ENCODE measurements at regions of chr4 and their contacts with region 1.

Region 1: DNA sequence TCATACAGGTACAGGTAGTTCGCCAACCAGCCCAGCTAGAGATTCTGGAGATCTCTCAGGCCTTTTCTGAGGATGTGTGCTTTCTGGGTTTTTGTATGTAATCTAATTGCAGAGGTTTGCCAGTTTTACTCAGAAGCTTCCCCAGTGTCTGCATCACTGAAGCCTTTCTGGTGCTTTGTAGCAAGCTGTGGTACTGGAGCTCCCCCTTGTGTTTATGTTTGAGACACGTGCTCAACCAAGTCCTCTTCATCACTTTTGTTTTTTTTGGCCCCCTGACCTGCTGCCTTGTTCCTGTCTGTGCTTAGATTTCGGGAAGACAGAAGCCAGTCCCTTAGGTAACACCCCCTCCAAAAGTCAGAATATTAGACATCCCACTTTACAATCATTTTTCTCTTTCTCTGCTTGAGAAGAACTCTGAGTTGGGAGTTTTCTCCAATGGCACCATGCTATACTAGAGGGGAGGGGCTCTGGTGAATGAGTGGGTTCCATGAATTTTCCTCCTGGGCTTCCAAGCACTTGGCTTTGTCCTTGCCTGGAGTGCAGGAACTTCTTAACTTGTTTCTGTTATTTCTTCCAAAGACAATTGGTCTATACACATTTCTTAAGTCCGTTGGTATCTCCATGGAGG is 128.4 kb upstream of the TBC1D9 start:
- DNase-seq: peak; percentile 48 to 55
- H3K4me3 ChIP-seq: no peak overlapping the region
- H3K27ac ChIP-seq: no peak overlapping the region
- H3K4me1 ChIP-seq: no peaks in the 10 kb centered on the region
- H3K27me3 ChIP-seq: no peaks in the 10 kb centered on the region
- CTCF ChIP-seq: peak; percentile 75

Region 2: DNA sequence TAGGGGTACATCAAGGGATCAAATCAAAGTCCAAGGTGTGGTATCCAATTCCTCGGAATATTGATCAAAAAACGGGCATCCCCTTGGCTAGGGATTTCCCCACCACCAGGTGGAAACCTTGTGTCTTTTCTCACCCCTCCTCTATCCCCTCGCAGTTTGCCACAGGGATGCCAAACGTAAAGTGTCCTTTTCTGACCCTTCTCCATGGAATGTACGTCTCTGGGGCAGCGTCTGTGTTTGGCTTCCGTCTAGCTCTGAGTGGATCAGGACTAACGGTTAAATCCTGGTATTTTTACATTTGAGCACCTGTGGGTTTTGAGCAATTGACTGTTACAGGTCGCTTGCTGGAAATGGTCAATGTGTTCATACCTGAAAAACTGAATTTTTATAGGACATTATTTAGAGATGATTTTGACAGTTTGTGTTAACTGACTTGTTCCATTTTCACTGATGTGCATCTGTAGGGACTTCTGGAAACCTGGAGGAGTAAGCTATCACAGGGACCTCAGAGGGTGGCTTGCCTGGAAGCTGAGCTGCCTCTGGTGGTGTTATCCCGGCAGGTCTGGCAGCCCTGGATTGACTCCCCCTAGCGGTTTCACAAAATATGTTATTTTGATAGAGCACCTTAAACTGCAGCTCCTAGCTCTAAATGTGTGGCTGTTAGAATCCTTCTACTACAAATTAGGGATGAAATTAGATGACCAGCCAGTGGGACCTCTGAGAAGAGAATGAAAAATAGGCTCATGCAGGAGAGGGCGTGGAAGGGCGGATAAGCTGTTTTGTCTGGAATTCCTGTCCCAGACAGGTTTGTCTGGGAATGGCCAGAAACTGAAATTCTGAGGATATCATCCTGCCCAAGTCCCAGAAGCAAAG is 1227.7 kb before region 1 on chr4:
- CTCF ChIA-PET with region 1: no interaction called
- POLR2A ChIA-PET with region 1: no interaction called
- intact Hi-C with region 1: loop called (anchors 5 kb)
- DNase-seq: peak in 1 of 2 experiments; percentile 53
- H3K4me3 ChIP-seq: no peak overlapping the region
- H3K27ac ChIP-seq: no peak overlapping the region
- H3K4me1 ChIP-seq: peaks cover 19% of the 10 kb centered on the region
- H3K27me3 ChIP-seq: no peaks in the 10 kb centered on the region
- CTCF ChIP-seq: peak; percentile 85

Region 3: GRCh38 chr4:140595065-140595464 is 289.5 kb before region 1 on chr4:
- CTCF ChIA-PET with region 1: no interaction called
- POLR2A ChIA-PET with region 1: no interaction called
- intact Hi-C with region 1: loop called (anchors 1 kb)
- DNase-seq: peak; percentile 40 to 46
- H3K4me3 ChIP-seq: no peak overlapping the region
- H3K27ac ChIP-seq: no peak overlapping the region
- H3K4me1 ChIP-seq: no peaks in the 10 kb centered on the region
- H3K27me3 ChIP-seq: no peaks in the 10 kb centered on the region
- CTCF ChIP-seq: peak; percentile 67

Region 4: DNA sequence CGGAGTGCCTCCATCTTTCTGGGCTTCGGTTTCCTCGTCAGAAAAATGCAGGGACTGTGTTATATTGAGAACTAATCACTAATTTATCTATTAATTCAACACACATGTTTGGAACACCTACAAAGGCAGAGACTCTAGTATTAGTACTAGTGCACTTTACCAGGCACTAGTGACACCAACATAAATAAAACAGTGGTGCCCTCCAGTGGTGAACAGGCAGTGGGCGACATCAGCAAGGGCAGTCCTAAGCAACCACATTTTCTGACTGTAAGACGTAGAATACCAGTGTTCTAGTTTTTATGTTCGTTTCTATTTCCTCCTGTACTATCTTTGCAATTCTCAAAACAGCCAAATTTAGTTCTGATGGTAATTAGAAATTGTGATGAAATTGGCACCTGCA is 246.7 kb before region 1 on chr4:
- CTCF ChIA-PET with region 1: interaction called, 11 read pairs
- POLR2A ChIA-PET with region 1: no interaction called
- intact Hi-C with region 1: no loop called
- DNase-seq: no peak
- H3K4me3 ChIP-seq: no peak overlapping the region
- H3K27ac ChIP-seq: no peak overlapping the region
- H3K4me1 ChIP-seq: peaks cover 23% of the 10 kb centered on the region
- H3K27me3 ChIP-seq: no peaks in the 10 kb centered on the region
- CTCF ChIP-seq: peak; percentile 63

Region 5: GRCh38 chr4:140816806-140817510 is 67.6 kb before region 1 on chr4:
- CTCF ChIA-PET with region 1: no interaction called
- POLR2A ChIA-PET with region 1: no interaction called
- intact Hi-C with region 1: no loop called
- DNase-seq: no peak
- H3K4me3 ChIP-seq: no peak overlapping the region
- H3K27ac ChIP-seq: no peak overlapping the region
- H3K4me1 ChIP-seq: no peaks in the 10 kb centered on the region
- H3K27me3 ChIP-seq: no peaks in the 10 kb centered on the region
- CTCF ChIP-seq: no peak

Region 6: DNA sequence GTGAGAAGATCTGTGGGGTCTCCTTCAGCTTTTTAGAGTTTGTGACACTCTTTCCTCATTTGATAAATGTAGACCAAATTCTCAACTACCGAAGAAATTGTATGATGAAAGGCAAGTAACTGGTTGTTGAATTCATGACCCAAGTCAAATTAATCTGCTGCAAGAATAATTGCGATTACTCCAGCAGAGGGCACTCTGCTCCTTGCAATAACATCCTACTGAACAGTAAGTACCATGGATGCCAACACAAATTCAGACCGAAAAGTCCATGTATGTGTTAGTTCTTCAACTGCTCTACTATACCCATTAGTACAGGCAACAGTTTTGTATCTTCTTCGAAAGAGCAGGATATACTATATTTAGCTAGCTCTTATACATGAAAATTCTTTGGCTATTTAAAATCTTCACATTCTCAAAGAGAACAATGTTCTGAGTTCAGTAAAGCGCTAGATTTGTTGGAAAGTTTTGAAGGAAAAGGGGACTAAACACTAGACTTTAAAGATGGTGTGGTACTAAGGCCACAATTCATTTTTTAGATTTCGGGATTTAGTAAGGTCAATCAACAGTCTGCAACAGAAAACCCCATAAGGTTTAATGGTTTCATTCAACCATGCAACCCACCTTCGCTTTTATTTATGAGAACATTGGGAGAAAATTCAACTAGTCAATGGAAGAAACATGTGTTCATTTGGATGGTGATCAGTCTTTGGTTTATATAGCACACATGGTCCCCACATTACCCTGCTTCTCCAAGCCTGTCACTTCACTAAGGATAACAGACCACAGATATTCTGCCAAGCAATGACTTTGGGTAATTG is 23.0 kb before region 1 on chr4:
- CTCF ChIA-PET with region 1: interaction called, 4 read pairs
- POLR2A ChIA-PET with region 1: interaction called, 15 read pairs
- intact Hi-C with region 1: loop called (anchors 1 kb)
- DNase-seq: peak; percentile 48 to 51
- H3K4me3 ChIP-seq: no peak overlapping the region
- H3K27ac ChIP-seq: no peak overlapping the region
- H3K4me1 ChIP-seq: peaks cover 13% of the 10 kb centered on the region
- H3K27me3 ChIP-seq: no peaks in the 10 kb centered on the region
- CTCF ChIP-seq: peak; percentile 79

Region 7: GRCh38 chr4:140874056-140874455 is 10.5 kb before region 1 on chr4:
- CTCF ChIA-PET with region 1: no interaction called
- POLR2A ChIA-PET with region 1: no interaction called
- intact Hi-C with region 1: no loop called
- DNase-seq: no peak
- H3K4me3 ChIP-seq: no peak overlapping the region
- H3K27ac ChIP-seq: no peak overlapping the region
- H3K4me1 ChIP-seq: no peaks in the 10 kb centered on the region
- H3K27me3 ChIP-seq: no peaks in the 10 kb centered on the region
- CTCF ChIP-seq: no peak

Region 8: GRCh38 chr4:141022111-141022695 is 137.7 kb after region 1 on chr4:
- CTCF ChIA-PET with region 1: no interaction called
- POLR2A ChIA-PET with region 1: interaction called, 10 read pairs
- intact Hi-C with region 1: no loop called
- DNase-seq: no peak
- H3K4me3 ChIP-seq: no peak overlapping the region
- H3K27ac ChIP-seq: no peak overlapping the region
- H3K4me1 ChIP-seq: no peaks in the 10 kb centered on the region
- H3K27me3 ChIP-seq: no peaks in the 10 kb centered on the region
- CTCF ChIP-seq: no peak

Region 9: DNA sequence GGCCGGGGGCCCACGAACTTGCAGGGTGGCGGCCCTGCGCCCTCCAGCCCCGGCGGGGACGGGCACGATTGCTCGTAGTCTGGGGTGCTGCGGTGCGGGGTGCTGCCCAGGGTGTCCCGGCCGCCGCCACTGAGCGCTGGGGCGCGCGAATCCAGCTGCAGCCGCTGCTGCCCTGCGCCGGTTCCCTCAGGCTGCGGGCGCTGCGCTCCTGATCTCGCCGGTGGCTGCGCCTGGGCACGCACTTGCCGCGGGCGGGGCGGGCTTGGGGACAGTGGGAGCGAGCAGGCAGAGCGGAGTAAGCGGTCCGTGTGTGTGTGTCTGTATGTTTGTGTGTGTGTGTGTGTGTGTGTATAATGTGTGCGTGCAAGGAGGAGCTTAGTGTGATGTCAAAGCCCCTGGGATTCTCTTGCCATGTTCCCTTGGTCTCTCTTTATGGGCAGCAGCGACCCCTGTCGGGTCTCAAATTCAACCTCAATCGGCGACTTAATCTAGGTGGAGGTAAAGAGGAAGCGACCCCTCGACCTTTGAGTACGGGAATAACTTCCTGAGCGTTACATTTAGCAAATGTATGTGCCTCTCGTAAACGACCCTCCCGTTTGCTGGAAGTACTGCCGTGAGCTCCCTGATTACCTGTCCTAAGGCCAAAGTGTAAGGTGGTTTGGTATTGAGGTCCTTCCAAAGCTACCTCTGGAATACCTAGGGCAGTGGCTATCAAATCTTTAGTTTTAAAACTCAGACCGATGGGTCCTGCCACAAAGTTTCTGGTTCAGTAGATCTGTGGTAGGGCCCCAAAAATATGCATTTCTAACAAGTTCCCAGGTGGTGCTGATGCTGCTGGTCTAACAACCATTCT is 248.8 kb after region 1 on chr4 and contains the start of gene RNF150:
- CTCF ChIA-PET with region 1: interaction called, 4 read pairs
- POLR2A ChIA-PET with region 1: no interaction called
- intact Hi-C with region 1: loop called (anchors 5 kb)
- DNase-seq: peak in 1 of 2 experiments; percentile 52
- H3K4me3 ChIP-seq: peak within 1 kb of the TSS; percentile 44; the same call in 1 of the 2 replicates
- H3K27ac ChIP-seq: no peak within 1 kb of the TSS
- H3K4me1 ChIP-seq: no peaks in the 10 kb centered on the region
- H3K27me3 ChIP-seq: no peaks in the 10 kb centered on the region
- CTCF ChIP-seq: peak; percentile 63
- total RNA-seq, gene RNF150: 0.15 and 0.75 TPM in 2 replicates